Activated CD8-positive, alpha-beta memory T cell treated with anti-CD3 and anti-CD28 coated beads, Interleukin-2, amount 10 ng/mL, durations not matched to agents 7 days and 5 days (primary cell): ENCODE measurements at regions of chr15 and their contacts with region 1.

Region 1: DNA sequence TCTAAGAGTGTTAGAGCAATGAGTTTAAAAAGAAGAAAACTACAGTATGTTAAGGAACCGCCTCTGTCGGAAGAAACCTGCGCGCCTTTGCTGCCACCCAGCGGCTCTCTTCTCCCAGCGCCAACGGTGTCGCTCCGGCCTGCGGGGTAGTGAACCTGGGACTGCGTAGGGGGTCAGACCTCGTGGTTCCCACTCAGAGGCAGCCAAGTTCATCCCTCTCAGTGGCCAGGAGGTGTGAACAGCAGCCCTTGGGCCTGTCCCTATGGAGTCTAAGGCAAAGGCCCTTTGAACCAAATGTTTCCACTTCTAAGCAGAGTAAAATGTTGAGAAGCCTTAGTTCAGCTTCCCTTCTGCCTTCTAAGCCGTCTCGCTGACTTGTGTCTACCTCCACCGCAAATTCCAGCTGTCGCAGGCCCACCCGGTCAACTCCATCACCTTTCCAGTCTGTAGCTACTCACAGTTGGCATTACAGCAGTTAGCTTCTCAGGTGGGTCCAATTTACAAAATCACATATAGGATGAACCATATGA is 980 bp upstream of the RAB27A start:
- DNase-seq: peak; percentile 90
- ATAC-seq: peak; percentile 70
- H3K4me3 Mint-ChIP-seq: peak overlapping the region; percentile 95
- H3K27ac Mint-ChIP-seq: peak overlapping the region; percentile 89
- H3K4me1 Mint-ChIP-seq: peaks cover 25% of the 10 kb centered on the region
- H3K27me3 Mint-ChIP-seq: no peaks in the 10 kb centered on the region

Region 2: DNA sequence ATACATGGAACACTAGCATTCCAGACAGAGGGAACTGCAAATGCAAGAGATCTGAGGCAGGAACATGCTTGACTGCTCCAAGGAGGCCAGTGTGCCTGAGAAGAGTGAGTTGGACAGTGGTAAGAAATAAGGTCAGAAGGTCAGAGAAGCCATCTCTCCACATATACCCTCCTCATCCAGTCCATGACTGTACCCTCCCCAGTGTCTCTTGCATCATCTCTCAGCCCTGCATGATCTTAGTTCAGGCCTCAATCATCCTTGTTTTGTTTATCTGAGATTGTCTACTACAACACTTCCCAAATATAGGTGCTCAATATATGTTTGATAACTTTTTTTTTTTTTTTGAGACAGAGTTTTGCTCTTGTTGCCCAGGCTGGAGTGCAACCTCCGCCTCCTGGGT is 88.4 kb before region 1 on chr15:
- CTCF ChIA-PET with region 1: interaction called, 10 read pairs
- DNase-seq: no peak
- ATAC-seq: no peak
- H3K4me3 Mint-ChIP-seq: no peak overlapping the region
- H3K27ac Mint-ChIP-seq: no peak overlapping the region
- H3K4me1 Mint-ChIP-seq: peaks cover 5% of the 10 kb centered on the region
- H3K27me3 Mint-ChIP-seq: no peaks in the 10 kb centered on the region

Region 3: DNA sequence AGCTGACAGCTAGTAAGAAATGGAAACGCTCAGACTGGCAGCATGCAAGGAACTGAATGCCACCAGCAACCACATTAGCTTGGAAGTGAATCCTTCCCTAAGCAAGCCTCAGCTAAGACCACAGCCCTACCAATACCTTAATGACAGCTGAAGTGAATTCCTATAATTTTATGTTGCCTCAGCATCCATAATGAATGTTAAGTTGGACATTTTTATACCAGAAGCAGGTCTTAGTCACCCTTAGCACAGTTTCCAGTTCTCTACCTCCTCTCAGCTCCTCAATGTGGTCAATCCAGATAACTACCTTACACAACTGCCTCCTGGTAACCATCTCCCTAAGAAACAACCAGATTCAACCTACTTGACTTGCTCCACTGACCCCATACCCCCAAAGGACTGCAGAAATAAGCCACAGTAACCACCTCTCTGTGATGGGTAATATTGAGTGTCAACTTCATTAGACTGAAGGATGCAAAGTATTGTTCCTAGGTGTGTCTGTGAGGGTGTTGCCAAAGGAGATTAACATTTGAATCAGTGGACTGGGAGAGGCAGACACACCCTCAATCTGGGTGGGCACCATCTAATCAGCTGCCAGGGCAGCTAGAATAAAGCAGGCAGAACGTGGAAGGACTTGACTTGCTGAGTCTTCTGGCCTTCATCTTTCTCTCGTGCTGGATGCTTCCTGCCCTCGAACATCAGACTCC is 669.3 kb after region 1 on chr15:
- CTCF ChIA-PET with region 1: no interaction called
- DNase-seq: no peak
- ATAC-seq: no peak
- H3K4me3 Mint-ChIP-seq: no peak overlapping the region
- H3K27ac Mint-ChIP-seq: no peak overlapping the region
- H3K4me1 Mint-ChIP-seq: no peaks in the 10 kb centered on the region
- H3K27me3 Mint-ChIP-seq: no peaks in the 10 kb centered on the region